ENCODE measurements at regions of chr4 and their contacts with region 1.

Region 1: GRCh38 chr4:16289897-16290554 is 63.8 kb upstream of the TAPT1 start:
- DNase-seq: peak in 2 of 9 experiments; percentile 24 to 41
- ATAC-seq: no peak
- H3K4me3 ChIP-seq: no peak overlapping the region
- H3K4me3 Mint-ChIP-seq: no peak overlapping the region
- H3K27ac ChIP-seq: no peak overlapping the region
- H3K27ac Mint-ChIP-seq: no peak overlapping the region
- H3K4me1 ChIP-seq: no peaks in the 10 kb centered on the region
- H3K4me1 Mint-ChIP-seq: peaks cover 4% of the 10 kb centered on the region
- H3K27me3 ChIP-seq: no peaks in the 10 kb centered on the region
- H3K27me3 Mint-ChIP-seq: peaks cover 23% of the 10 kb centered on the region
- CTCF ChIP-seq: peak; percentile 65

Region 2: DNA sequence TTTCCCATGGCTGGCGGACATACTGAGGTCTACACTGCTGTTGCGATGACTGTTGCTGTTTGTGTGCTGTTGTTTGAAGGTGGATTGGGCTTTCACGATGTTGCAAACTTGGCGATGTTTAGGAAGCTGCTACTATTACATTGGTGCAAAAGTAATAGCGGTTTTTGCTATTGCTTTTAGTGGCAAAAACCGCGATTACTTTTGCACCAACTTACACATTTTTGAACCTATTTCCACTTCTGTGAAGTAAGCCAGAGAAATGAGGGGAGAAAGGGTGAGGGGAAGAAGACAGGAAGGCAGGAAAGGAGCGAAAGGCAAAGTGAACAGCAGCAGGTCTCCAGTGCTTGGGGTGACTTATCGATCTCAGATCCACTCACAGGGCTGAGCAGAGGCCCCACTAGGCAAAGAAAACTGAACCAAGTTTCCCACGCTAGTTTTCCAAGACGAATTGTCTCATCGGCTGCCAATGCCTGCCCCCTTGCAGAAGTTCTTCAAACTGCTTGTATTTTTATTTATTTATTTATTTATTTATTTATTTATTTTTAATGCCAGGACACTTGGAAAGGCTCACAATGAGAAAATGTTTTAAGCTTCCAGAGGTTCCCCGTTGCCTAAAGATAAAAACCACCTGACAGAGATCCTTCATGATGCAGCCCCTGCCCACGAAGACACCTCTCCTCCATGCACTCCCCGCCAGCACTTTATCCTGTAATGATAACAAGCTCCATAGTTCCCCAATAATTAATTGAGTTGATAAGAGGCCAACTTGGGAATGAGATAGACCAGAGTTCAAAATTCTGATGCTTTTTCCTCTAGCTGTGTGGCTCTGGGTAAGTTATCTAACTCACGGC is 1178.6 kb after region 1 on chr4:
- CTCF ChIA-PET with region 1: interaction called, 11 read pairs
- POLR2A ChIA-PET with region 1: no interaction called
- intact Hi-C with region 1: loop called in 1 of 2 experiments (anchors 1 kb)
- DNase-seq: peak in 1 of 9 experiments; percentile 18
- ATAC-seq: no peak
- H3K4me3 ChIP-seq: no peak overlapping the region
- H3K4me3 Mint-ChIP-seq: no peak overlapping the region
- H3K27ac ChIP-seq: no peak overlapping the region
- H3K27ac Mint-ChIP-seq: no peak overlapping the region
- H3K4me1 ChIP-seq: no peaks in the 10 kb centered on the region
- H3K4me1 Mint-ChIP-seq: no peaks in the 10 kb centered on the region
- H3K27me3 ChIP-seq: no peaks in the 10 kb centered on the region
- H3K27me3 Mint-ChIP-seq: no peaks in the 10 kb centered on the region
- CTCF ChIP-seq: no peak

Measured in CD8-positive, alpha-beta T cell (primary cell).